Left cardiac atrium (tissue), 4 donors: ENCODE measurements at regions of chr3 and their contacts with region 1.

Region 1: DNA sequence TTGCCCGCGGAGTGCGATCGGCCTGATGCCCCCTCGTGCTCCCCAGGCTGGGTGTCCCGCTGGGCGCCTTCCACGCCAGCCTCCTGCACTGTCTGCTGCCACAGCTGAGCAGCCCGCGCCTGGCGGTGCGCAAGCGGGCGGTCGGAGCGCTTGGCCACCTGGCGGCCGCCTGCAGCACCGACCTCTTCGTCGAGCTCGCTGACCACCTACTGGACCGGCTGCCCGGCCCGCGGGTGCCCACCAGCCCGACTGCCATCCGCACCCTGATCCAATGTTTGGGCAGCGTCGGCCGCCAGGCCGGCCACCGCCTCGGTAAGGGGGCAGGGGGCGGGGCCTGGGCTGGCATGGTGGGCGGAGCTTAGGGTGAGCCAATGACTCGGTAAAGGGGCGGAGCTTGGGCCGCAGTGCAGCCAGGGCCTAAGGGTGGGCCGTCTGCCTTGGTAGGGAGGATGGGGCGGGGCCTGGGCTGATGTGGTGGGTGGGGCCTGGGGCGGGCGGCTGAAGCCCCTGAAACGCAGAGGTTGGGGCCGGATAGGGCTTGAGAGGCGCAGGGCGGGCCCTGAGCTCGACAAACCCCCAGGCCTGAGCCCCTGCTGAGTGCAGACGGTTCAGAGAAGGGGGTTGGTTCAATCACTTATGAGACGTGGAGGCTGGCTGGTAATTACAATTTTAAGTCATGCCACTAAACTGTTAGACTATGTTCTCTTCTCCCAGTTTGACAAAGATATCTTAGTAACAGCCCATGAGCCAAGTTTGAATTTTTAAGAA is 13.7 kb downstream of the CAND2 start:
- DNase-seq: peak; percentile 97
- ATAC-seq: peak; percentile 99

Region 2: DNA sequence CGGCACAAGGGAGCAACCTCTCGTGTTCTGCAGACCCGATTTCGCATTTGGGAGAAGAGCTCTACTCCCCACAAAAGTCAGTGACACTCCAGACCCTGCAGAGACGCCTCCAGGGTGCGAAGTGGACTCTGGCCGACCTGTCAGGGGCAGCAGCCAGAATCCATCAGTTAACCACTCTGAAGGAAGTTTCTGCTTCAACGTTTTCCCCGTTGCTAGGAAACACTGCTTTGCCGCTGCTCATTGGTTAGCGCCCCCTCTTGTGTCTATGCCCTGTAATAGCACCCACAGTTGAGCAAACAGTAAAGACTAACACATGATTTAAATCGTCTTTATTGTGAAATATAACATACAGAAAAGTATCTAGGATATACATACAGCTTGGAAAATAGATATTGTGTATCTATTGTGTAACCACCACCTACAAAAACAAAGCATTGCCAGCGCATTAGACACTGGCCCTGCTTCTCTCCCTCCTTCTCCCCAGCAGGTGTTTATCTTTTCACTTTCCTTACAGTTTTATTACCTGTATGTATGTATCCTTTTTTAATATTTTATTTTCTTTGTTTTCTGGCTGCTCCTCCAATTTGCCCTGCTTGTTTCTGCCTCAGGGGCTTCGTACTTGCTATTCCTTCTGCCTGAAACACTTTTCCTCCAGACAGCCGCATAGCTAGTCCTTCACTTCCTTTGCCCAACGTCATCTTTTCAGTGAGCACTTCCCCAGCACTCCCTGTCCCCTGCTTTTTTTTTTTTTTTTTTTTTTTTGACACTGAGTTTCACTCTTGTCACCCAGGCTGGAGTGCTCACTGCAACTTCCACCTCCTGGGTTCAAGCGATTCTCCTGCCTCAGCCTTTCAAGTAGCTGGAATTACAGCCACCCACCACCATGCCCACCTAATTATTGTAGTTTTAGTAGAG is 90.0 kb before region 1 on chr3:
- intact Hi-C with region 1: loop called in 1 of 2 experiments (anchors 10 kb)
- DNase-seq: peak; percentile 76
- ATAC-seq: peak; percentile 97

Region 3: GRCh38 chr3:12875857-12876836 is 66.0 kb after region 1 on chr3:
- intact Hi-C with region 1: no loop called
- DNase-seq: peak; percentile 72
- ATAC-seq: peak; percentile 80 to 87